ENCODE measurements at regions of chr9 and their contacts with region 1.

Region 1: GRCh38 chr9:37449862-37450632 is 15.2 kb downstream of the ZBTB5 start:
- DNase-seq: peak in 5 of 10 donors; percentile 51 to 93 (median 60)

Region 2: GRCh38 chr9:37415011-37415719 is 34.9 kb before region 1 on chr9:
- intact Hi-C with region 1: loop called (anchors 2 kb)
- DNase-seq: peak in 9 of 10 donors; percentile 60 to 93 (median 79)

Measured in posterior cingulate gyrus (tissue), 11 donors.